ENCODE measurements at regions of chr7 and their contacts with region 1.

Region 1: GRCh38 chr7:1144269-1144771 is 15.7 kb downstream of the ZFAND2A start:
- DNase-seq: peak; percentile 92
- H3K4me3 ChIP-seq: peak overlapping the region in 1 of 2 experiments; percentile 20; a peak in 3 of 4 replicates
- H3K27ac ChIP-seq: peak overlapping the region in 1 of 2 experiments; percentile 41; a peak in 2 of 4 replicates
- H3K4me1 ChIP-seq: peaks cover 0 to 22% of the 10 kb centered on the region in 2 experiments; a peak in 2 of 4 replicates
- H3K27me3 ChIP-seq: no peaks in the 10 kb centered on the region
- CTCF ChIP-seq: peak; percentile 70
- EP300 ChIP-seq: no peak; a peak in 1 of 4 replicates
- RAD21 ChIP-seq: peak; percentile 99

Region 2: DNA sequence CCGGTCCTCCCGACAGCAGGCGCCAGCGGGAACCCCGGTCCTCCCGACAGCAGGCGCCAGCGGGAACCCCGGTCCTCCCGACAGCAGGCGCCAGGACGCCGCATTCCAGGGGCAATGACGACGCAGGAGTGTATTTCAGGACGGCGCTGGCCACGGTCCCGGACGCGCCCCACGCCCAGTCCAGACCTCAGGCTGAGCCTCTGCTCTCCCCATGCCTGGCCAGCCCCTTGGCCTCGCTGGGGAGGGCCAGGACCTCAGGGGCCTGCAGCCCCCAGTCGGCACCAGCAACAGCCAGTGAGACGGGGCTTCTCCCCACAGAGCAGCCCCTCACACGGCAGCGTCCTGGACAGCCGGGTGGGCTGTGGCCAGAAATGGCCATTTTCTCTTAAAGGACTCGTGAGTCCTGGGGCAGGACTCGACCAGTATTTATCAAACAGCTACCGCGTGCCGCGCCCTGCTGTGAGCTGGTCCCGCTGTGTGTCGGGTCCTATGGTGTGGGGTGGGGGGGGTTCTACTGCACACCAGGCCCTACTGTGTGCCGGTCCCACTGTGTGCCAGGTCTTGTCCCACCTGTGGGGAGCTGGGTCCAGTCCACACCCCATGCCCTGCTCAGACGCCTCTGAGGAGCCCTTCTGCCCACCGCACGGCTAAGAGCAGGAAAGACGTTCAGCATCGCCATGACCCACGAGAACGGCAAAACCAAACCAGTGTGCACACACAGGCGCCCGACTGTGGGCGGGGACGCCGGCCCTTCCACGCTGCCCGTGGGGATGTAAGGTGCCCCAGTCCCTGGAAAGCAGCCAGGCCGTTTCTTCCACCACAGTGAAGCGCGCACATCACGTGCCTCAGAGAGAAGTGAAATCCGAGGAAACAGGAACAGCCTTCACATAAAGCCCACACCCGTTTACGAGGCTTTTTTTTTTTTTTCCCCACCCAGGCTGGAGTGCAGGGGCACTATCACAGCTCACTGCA is 234.7 kb before region 1 on chr7:
- CTCF ChIA-PET with region 1: interaction called, 26 read pairs
- POLR2A ChIA-PET with region 1: no interaction called
- DNase-seq: peak; percentile 82
- H3K4me3 ChIP-seq: peak overlapping the region in 1 of 2 experiments; percentile 37; a peak in 2 of 4 replicates
- H3K27ac ChIP-seq: no peak overlapping the region
- H3K4me1 ChIP-seq: peaks cover 4% of the 10 kb centered on the region in 2 experiments; a peak in 3 of 4 replicates
- H3K27me3 ChIP-seq: no peaks in the 10 kb centered on the region
- CTCF ChIP-seq: no peak
- EP300 ChIP-seq: no peak
- RAD21 ChIP-seq: no peak

Region 3: DNA sequence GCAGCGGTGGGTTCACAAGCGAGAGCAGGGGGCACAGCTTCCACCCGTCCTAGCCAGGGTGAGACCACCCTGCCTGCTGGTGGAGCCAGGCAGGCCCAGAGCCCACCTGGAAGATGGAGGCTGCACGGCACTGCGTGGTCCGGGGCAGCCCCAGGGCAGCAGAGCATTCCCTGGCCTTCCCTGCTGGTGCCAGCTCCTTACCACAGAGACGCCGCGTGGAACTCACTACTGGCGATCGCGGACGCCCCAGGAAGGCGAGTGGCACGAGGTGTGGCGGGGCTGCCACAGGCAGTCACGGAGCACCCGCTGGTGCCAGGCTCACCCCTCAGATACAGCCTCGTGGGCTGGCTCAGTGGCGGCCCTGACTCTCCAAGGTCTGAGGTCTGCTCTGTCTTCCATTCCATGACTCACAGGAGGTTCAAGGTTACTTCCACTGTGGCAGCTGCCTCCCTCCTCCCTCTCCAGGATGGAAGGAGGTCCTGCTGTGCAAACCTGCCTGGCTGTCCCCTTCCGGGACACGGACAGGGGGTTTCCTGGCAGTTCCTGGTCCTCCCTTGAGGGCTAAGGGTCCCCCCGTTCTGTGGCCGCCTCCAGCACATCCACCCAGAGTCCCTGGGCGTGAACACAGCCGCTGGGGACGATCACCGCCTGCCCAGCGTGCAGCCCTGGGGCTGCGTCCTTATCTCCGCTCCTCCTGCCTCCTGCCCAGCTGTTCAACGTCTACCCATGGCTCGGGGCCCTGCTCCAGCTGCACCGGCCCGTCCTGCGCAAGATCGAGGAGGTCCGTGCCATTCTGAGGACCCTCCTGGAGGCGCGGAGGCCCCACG is 158.2 kb before region 1 on chr7:
- CTCF ChIA-PET with region 1: interaction called, 327 read pairs
- POLR2A ChIA-PET with region 1: no interaction called
- DNase-seq: peak; percentile 70
- H3K4me3 ChIP-seq: no peak overlapping the region
- H3K27ac ChIP-seq: no peak overlapping the region
- H3K4me1 ChIP-seq: peaks cover 0 to 8% of the 10 kb centered on the region in 2 experiments; a peak in 1 of 4 replicates
- H3K27me3 ChIP-seq: no peaks in the 10 kb centered on the region
- CTCF ChIP-seq: no peak
- EP300 ChIP-seq: no peak
- RAD21 ChIP-seq: no peak

Region 4: GRCh38 chr7:1112109-1112508 is 32.2 kb before region 1 on chr7:
- CTCF ChIA-PET with region 1: interaction called, 10 read pairs
- POLR2A ChIA-PET with region 1: no interaction called
- DNase-seq: no peak
- H3K4me3 ChIP-seq: no peak overlapping the region
- H3K27ac ChIP-seq: no peak overlapping the region; a peak in 1 of 4 replicates
- H3K4me1 ChIP-seq: no peaks in the 10 kb centered on the region
- H3K27me3 ChIP-seq: no peaks in the 10 kb centered on the region
- CTCF ChIP-seq: no peak
- EP300 ChIP-seq: no peak
- RAD21 ChIP-seq: no peak

Region 5: GRCh38 chr7:1159891-1160668 is 15.8 kb after region 1 on chr7 and contains the start of gene ZFAND2A:
- CTCF ChIA-PET with region 1: interaction called, 29 read pairs
- POLR2A ChIA-PET with region 1: no interaction called
- DNase-seq: peak; percentile 100
- H3K4me3 ChIP-seq: peak within 1 kb of the TSS; percentile 91 to 97
- H3K27ac ChIP-seq: peak within 1 kb of the TSS; percentile 81 to 94
- H3K4me1 ChIP-seq: peaks cover 14 to 16% of the 10 kb centered on the region in 2 experiments
- H3K27me3 ChIP-seq: no peaks in the 10 kb centered on the region
- CTCF ChIP-seq: no peak
- EP300 ChIP-seq: peak in 1 of 2 experiments; percentile 87; a peak in 2 of 4 replicates
- RAD21 ChIP-seq: no peak
- polyA plus RNA-seq, gene ZFAND2A: 38.9 and 48.5 TPM in 2 replicates

Region 6: DNA sequence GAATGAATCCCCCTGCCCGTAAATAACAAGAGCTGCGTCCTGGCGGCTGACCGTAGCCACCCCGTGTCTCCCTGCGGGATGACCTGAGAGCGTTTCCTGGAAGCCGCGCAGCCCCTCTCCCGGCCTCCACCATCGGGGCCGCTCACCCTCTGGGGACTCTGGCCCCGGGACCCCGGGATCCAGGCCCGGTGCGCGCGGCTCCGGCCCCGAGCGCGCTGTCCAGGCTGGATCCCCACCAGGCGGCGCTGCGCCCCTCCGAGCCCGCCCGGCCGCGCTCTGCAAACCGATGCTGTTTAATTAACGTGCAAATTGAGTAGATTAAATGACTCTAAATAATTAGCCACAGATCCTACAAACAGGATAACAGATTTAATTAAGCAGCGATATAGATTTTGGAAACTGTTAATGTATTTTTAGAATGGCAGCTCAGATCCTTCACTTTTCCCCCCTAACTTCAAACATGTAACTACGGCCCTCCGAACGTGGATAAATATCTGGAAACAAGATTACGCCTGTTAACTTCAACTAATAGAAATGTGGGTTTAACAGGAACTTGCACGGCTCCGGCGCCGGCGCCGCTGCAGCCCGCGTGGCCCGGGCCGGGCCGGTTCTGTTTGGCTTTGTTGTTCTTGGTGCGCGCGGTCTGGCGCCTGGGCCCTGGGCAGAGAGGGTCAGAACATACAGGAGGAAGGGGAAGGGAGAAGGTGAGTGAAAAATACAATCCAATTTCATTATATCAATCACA is 81.3 kb after region 1 on chr7:
- CTCF ChIA-PET with region 1: no interaction called
- POLR2A ChIA-PET with region 1: no interaction called
- DNase-seq: peak; percentile 95
- H3K4me3 ChIP-seq: no peak overlapping the region; a peak in 1 of 4 replicates
- H3K27ac ChIP-seq: no peak overlapping the region
- H3K4me1 ChIP-seq: peaks cover 0 to 3% of the 10 kb centered on the region in 2 experiments; a peak in 1 of 4 replicates
- H3K27me3 ChIP-seq: peaks cover 94% of the 10 kb centered on the region
- CTCF ChIP-seq: peak; percentile 98
- EP300 ChIP-seq: no peak
- RAD21 ChIP-seq: peak; percentile 72